Caco-2 (cell line): ENCODE measurements at regions of chr19 and their contacts with region 1.

Region 1: DNA sequence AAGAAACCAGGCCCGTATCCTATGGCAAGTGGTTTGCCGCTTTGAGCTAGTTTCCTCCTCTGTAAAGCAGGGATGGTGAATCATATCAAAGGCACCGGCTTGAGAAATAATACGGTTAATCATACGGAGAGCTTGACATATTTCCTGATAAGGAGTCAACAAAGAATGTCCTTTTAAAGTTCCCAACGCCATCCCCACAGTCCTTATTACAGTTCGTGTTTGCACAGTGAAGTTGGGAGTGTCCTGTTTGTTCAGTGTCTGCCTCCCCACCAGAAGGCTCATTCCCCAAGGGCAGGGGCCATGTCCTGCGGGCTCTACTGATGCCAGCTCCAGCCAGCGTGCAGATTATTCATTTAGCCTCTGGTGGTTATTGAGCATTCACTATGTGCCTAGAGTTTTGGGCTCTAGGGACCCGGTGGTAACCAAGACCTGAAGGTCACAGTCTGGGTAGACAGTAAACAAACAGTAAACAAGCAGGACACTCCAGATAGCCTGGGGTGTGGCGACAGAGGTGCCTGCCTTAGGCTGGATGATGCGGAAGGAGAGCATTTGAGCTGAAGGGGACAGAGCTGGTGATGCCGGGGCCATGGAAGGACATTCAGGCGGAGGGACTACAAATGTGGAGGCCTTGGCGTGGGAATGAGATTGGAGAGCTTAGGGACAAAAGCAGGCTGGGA is 6.4 kb downstream of the GRAMD1A start:
- DNase-seq: peak; percentile 94 to 96
- H3K4me3 ChIP-seq: no peak overlapping the region
- H3K4me3 Mint-ChIP-seq: peak overlapping the region; percentile 70
- H3K27ac Mint-ChIP-seq: peak overlapping the region; percentile 98
- H3K4me1 ChIP-seq: peaks cover 55% of the 10 kb centered on the region
- H3K4me1 Mint-ChIP-seq: peaks cover 52% of the 10 kb centered on the region
- H3K27me3 ChIP-seq: no peaks in the 10 kb centered on the region
- H3K27me3 Mint-ChIP-seq: no peaks in the 10 kb centered on the region
- CTCF ChIP-seq: no peak

Region 2: GRCh38 chr19:34838753-34839431 is 167.6 kb before region 1 on chr19:
- CTCF ChIA-PET with region 1: interaction called, 3 read pairs
- POLR2A ChIA-PET with region 1: no interaction called
- intact Hi-C with region 1: loop called (anchors 2 kb)
- DNase-seq: peak; percentile 60 to 73
- H3K4me3 ChIP-seq: peak overlapping the region; percentile 26
- H3K4me3 Mint-ChIP-seq: peak overlapping the region; percentile 63
- H3K27ac Mint-ChIP-seq: no peak overlapping the region
- H3K4me1 ChIP-seq: peaks cover 11% of the 10 kb centered on the region
- H3K4me1 Mint-ChIP-seq: peaks cover 11% of the 10 kb centered on the region
- H3K27me3 ChIP-seq: no peaks in the 10 kb centered on the region
- H3K27me3 Mint-ChIP-seq: peaks cover 16% of the 10 kb centered on the region
- CTCF ChIP-seq: peak in 1 of 2 experiments; percentile 13

Region 3: GRCh38 chr19:35030257-35031071 is 24.0 kb after region 1 on chr19 and contains the start of gene SCN1B:
- CTCF ChIA-PET with region 1: no interaction called
- POLR2A ChIA-PET with region 1: interaction called, 4 read pairs
- intact Hi-C with region 1: loop called (anchors 2 kb)
- DNase-seq: peak; percentile 69 to 83
- H3K4me3 ChIP-seq: peak within 1 kb of the TSS; percentile 45
- H3K4me3 Mint-ChIP-seq: peak within 1 kb of the TSS; percentile 79
- H3K27ac Mint-ChIP-seq: no peak within 1 kb of the TSS
- H3K4me1 ChIP-seq: peaks cover 10% of the 10 kb centered on the region; the same call in 1 of the 2 replicates
- H3K4me1 Mint-ChIP-seq: peaks cover 8% of the 10 kb centered on the region
- H3K27me3 ChIP-seq: no peaks in the 10 kb centered on the region
- H3K27me3 Mint-ChIP-seq: peaks cover 6% of the 10 kb centered on the region
- CTCF ChIP-seq: no peak
- total RNA-seq, gene SCN1B: 1.7 and 1.9 TPM in 2 replicates

Region 4: GRCh38 chr19:35363001-35363590 is 356.6 kb after region 1 on chr19:
- CTCF ChIA-PET with region 1: no interaction called
- POLR2A ChIA-PET with region 1: no interaction called
- intact Hi-C with region 1: no loop called
- DNase-seq: no peak
- H3K4me3 ChIP-seq: no peak overlapping the region
- H3K4me3 Mint-ChIP-seq: no peak overlapping the region
- H3K27ac Mint-ChIP-seq: no peak overlapping the region
- H3K4me1 ChIP-seq: no peaks in the 10 kb centered on the region
- H3K4me1 Mint-ChIP-seq: no peaks in the 10 kb centered on the region
- H3K27me3 ChIP-seq: no peaks in the 10 kb centered on the region; the same call in 1 of the 2 replicates
- H3K27me3 Mint-ChIP-seq: no peaks in the 10 kb centered on the region
- CTCF ChIP-seq: no peak